Activated CD4-positive, alpha-beta T cell treated with anti-CD3 and anti-CD28 coated beads, Interleukin-2, amount 10 ng/mL, durations not matched to agents 24 days and 14 days (primary cell): ENCODE measurements at regions of chr15 and their contacts with region 1.

Region 1: DNA sequence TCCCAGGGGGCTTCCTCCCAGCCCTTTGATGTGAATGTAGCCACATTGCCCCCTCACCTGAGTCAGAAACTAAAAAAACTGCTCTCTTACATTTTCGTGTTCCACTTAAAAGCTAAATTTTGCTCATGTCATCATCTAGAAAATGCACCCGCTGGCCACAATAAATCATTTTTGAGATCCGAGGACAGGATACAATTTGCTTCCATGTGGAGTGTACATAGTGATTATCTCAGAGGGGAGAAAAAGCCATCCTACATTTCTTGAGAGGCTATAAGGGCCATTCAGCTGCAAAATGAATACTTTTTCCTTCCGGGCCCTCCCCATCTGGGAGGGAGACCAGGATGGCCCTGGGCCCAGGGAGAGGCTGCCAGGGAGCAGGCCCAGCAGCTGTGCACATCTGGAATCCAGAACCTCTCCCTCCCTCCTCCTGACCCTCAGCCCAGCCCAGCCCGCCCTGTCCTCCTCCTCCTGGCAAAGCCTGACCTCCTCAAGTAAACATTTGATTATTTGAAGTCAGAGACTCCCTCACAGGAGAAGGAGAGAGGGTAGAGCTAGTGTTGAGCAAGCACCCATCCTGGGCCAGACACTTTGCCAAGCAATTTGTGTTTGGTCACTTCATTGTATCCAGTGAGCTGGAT is 59.1 kb downstream of the CORO2B start:
- DNase-seq: no peak
- H3K4me3 Mint-ChIP-seq: no peak overlapping the region
- H3K27ac Mint-ChIP-seq: no peak overlapping the region
- H3K4me1 Mint-ChIP-seq: no peaks in the 10 kb centered on the region
- H3K27me3 Mint-ChIP-seq: peaks cover 2% of the 10 kb centered on the region

Region 2: DNA sequence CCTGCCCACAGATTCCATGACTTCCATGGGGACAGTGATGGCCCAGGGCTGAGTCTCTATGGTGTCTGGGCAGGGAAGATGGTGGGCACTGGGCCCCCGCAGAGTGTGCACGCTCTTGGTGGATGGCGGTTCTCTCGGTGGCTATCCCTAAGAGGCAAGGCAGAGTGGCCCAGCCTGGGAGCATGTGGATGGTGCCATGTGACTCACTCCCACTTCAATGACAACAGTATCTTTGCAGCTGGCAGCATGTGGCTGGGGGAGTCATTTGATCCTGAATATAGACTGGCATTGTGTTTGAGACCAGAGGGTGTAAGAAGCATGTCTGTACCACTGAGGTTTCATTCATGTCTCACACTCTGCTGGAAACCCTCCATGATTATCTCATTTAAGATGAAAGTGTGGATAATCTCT is 42.1 kb after region 1 on chr15:
- intact Hi-C with region 1: no loop called
- DNase-seq: no peak
- H3K4me3 Mint-ChIP-seq: no peak overlapping the region
- H3K27ac Mint-ChIP-seq: no peak overlapping the region
- H3K4me1 Mint-ChIP-seq: no peaks in the 10 kb centered on the region
- H3K27me3 Mint-ChIP-seq: no peaks in the 10 kb centered on the region

Region 3: DNA sequence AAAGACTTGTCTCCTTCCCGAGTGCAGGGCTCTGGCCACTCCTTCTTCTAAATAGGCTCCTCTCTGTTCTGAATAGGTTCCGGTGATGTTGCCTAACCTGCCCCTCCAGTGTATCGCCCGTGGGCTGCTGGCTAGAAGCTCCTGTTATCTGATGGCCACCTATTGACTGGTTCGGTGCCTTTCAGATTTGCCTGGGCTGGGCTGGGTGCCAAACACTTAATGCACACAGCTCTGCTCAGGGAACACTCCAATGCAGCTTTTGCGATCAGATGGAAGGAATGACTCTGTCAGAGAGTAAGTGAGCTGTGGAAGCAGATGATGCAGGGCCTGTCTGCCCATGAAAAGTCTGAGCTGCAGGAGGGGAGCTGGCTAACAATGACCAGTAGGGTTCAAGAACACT is 53.8 kb after region 1 on chr15:
- intact Hi-C with region 1: loop called (anchors 10 kb)
- DNase-seq: no peak
- H3K4me3 Mint-ChIP-seq: no peak overlapping the region
- H3K27ac Mint-ChIP-seq: no peak overlapping the region
- H3K4me1 Mint-ChIP-seq: peaks cover 6% of the 10 kb centered on the region
- H3K27me3 Mint-ChIP-seq: peaks cover 6% of the 10 kb centered on the region

Region 4: GRCh38 chr15:69045808-69046207 is 407.9 kb after region 1 on chr15:
- intact Hi-C with region 1: no loop called
- DNase-seq: no peak
- H3K4me3 Mint-ChIP-seq: no peak overlapping the region
- H3K27ac Mint-ChIP-seq: no peak overlapping the region
- H3K4me1 Mint-ChIP-seq: no peaks in the 10 kb centered on the region
- H3K27me3 Mint-ChIP-seq: peaks cover under 1% of the 10 kb centered on the region